Psoas muscle (tissue), 8 donors: ENCODE measurements at regions of chr3 and their contacts with region 1.

Region 1: GRCh38 chr3:10518506-10519150 is 13.2 kb upstream of the ATP2B2 start:
- DNase-seq: peak; percentile 49 to 79
- ATAC-seq: peak; percentile 92 to 96 (median 94)
- H3K4me3 ChIP-seq: no peak overlapping the region
- H3K27ac ChIP-seq: peak overlapping the region; percentile 89
- H3K4me1 ChIP-seq: peaks cover 35% of the 10 kb centered on the region
- H3K27me3 ChIP-seq: no peaks in the 10 kb centered on the region
- CTCF ChIP-seq: no peak

Region 2: GRCh38 chr3:10437995-10438901 is 80.4 kb before region 1 on chr3:
- intact Hi-C with region 1: loop called in 1 of 2 experiments (anchors 2 kb)
- DNase-seq: peak; percentile 66 to 90
- ATAC-seq: peak; percentile 91 to 94 (median 92)
- H3K4me3 ChIP-seq: no peak overlapping the region
- H3K27ac ChIP-seq: peak overlapping the region; percentile 94
- H3K4me1 ChIP-seq: peaks cover 49% of the 10 kb centered on the region
- H3K27me3 ChIP-seq: no peaks in the 10 kb centered on the region
- CTCF ChIP-seq: no peak

Region 3: DNA sequence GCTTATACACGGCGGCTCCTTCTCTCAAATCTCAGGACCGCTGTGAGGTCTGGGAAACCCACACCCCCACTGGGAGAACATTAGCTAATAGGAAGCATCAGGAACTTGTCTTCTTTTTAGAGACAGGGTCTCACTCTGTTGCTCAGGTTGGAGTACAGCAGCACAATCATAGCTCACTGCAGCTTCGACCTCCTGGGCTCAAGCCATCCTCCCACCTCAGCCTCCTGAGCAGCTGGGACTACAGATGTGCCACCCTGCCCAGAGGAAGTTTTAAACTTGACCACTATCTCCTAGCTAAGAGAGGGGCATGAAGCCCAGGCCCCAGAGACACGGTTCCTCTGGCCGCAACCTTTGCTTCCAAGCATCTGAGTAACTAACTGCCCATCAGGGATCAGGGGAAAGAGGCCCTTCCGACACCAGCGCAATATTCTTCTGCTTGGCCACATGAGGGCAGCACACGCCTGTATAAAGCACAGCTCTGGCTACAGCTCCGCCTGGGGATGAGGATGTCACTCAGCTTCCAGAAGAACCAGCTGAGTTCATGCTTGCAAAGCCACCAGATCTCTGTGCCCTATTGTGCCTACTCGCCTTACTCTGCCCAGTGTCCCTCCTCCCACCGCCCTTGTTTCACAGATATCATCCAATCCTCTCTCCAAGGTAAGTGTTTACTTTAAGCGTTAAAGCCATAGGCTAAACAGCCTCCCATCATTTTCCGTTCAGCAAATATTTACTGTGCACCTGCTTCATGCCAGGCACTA is 239.9 kb after region 1 on chr3:
- intact Hi-C with region 1: no loop called
- DNase-seq: peak; percentile 31 to 63
- ATAC-seq: peak; percentile 77 to 89 (median 84)
- H3K4me3 ChIP-seq: no peak overlapping the region
- H3K27ac ChIP-seq: no peak overlapping the region
- H3K4me1 ChIP-seq: no peaks in the 10 kb centered on the region
- H3K27me3 ChIP-seq: peaks cover 0 to 24% (median 7%) of the 10 kb centered on the region in 3 donors
- CTCF ChIP-seq: peak; percentile 61